ENCODE measurements at regions of chr1 and their contacts with region 1.

Region 1: GRCh38 chr1:166069390-166069789 is 97.4 kb downstream of the FAM78B start:
- DNase-seq: no peak
- H3K4me3 ChIP-seq: no peak overlapping the region
- H3K27ac ChIP-seq: no peak overlapping the region
- H3K4me1 ChIP-seq: no peaks in the 10 kb centered on the region
- H3K27me3 ChIP-seq: no peaks in the 10 kb centered on the region
- CTCF ChIP-seq: no peak
- POLR2A ChIP-seq: no peak

Region 2: GRCh38 chr1:166040202-166040997 is 29.0 kb before region 1 on chr1:
- intact Hi-C with region 1: no loop called
- DNase-seq: no peak
- H3K4me3 ChIP-seq: no peak overlapping the region
- H3K27ac ChIP-seq: no peak overlapping the region
- H3K4me1 ChIP-seq: no peaks in the 10 kb centered on the region
- H3K27me3 ChIP-seq: no peaks in the 10 kb centered on the region
- CTCF ChIP-seq: no peak
- POLR2A ChIP-seq: no peak

Region 3: DNA sequence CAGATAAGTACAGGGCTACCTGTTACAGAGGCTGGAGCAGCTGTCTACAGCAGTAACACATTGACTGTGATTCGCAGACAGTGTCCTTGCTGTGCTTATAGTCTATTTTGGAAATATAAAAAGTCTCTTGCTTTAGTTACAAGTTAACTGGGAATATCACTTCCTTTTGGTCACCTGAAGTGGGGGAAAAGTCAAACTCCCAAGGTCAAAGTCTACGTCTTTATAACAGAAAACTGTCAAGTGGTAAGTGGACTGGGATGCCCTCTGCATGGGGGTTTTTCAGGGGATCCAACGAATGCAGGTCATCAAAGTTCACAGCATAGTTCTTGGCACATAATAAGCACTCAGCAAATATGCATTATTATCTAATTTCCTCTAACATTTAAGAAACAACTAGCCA is 42.0 kb after region 1 on chr1:
- intact Hi-C with region 1: loop called (anchors 2 kb)
- DNase-seq: no peak
- H3K4me3 ChIP-seq: no peak overlapping the region
- H3K27ac ChIP-seq: no peak overlapping the region
- H3K4me1 ChIP-seq: no peaks in the 10 kb centered on the region
- H3K27me3 ChIP-seq: no peaks in the 10 kb centered on the region
- CTCF ChIP-seq: no peak
- POLR2A ChIP-seq: no peak

Region 4: GRCh38 chr1:166197141-166197540 is 127.8 kb after region 1 on chr1:
- intact Hi-C with region 1: no loop called
- DNase-seq: no peak
- H3K4me3 ChIP-seq: no peak overlapping the region
- H3K27ac ChIP-seq: no peak overlapping the region
- H3K4me1 ChIP-seq: no peaks in the 10 kb centered on the region
- H3K27me3 ChIP-seq: no peaks in the 10 kb centered on the region
- CTCF ChIP-seq: no peak
- POLR2A ChIP-seq: no peak